Dendritic cell treated with granulocyte-macrophage colony-stimulating factor and Interleukin-4, amounts not matched to agents 40 ng/mL and 50 ng/mL, for 4 days (primary cell): ENCODE measurements at regions of chr3 and their contacts with region 1.

Region 1: DNA sequence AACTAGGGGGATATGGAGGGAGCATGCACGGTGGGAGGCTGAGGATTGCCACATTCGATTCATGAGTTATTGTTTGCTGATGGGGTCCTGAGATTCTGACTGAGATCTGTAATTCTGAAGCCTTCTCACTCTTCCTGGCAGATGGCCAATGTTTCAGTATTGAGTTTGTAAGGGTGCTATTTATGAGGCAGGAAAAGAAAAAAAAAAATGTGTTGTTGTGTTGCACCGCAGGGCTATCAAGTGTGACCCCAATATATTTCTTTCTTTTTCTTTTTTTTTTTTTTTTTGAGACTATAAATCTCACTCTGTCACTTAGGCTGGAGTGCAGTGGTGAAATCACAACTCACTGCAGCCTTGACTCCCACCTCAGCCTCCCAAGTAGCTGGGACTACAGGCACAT is 3.2 kb upstream of the SENP2 start:
- H3K4me3 Mint-ChIP-seq: no peak overlapping the region
- H3K27ac Mint-ChIP-seq: no peak overlapping the region
- H3K4me1 Mint-ChIP-seq: peaks cover 15% of the 10 kb centered on the region
- H3K27me3 Mint-ChIP-seq: no peaks in the 10 kb centered on the region

Region 2: GRCh38 chr3:185387646-185388045 is 195.2 kb before region 1 on chr3:
- intact Hi-C with region 1: no loop called
- H3K4me3 Mint-ChIP-seq: no peak overlapping the region
- H3K27ac Mint-ChIP-seq: no peak overlapping the region
- H3K4me1 Mint-ChIP-seq: no peaks in the 10 kb centered on the region
- H3K27me3 Mint-ChIP-seq: peaks cover 2% of the 10 kb centered on the region

Region 3: DNA sequence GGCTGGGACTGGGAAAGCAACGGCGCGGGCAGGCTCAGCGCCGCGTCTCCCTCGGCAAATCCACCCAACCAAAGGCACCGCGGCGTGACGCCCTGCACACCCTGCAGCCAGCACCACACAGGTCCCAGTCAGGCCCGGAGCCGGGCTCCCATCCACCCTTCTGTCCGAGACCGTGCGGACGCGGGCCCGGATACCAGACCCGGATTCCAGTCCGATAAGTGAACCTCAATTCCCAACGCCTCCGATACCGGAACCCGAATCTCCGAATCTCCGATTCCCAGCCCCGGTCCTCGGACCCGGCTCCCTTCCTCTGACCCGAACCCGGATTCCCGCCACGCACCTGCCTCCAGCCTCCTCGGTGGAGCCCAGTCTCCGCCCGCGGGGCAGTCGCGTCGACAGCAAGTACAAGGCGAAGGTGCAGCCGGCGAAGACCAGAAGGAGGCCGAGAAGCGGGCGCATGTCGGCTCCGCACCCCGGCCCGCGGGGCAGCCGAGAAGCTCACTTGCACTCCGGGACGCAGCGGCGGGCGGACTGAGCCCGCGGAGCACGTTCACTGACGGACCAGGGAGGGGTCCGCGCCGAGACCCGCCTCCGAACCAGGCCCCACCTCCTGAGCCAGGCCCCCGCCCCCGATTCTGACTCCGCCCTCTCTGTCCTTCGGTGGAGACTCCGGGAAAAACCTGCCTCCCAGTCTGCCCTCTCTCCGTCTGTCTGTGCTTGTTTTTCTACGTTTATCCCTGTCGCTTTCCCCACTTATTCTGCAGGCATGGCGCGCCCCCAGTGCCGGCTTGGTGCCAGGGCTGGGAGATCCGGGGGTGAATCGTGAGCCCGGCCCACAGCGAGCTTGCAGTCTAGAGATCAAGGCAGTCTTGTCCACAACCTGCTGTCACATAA is 84.1 kb before region 1 on chr3 and contains the start of gene TMEM41A:
- intact Hi-C with region 1: loop called (anchors 5 kb)
- H3K4me3 Mint-ChIP-seq: peak within 1 kb of the TSS; percentile 97
- H3K27ac Mint-ChIP-seq: peak within 1 kb of the TSS; percentile 96
- H3K4me1 Mint-ChIP-seq: peaks cover 38% of the 10 kb centered on the region
- H3K27me3 Mint-ChIP-seq: peaks cover 2% of the 10 kb centered on the region